ENCODE measurements at regions of chr4 and their contacts with region 1.

Region 1: DNA sequence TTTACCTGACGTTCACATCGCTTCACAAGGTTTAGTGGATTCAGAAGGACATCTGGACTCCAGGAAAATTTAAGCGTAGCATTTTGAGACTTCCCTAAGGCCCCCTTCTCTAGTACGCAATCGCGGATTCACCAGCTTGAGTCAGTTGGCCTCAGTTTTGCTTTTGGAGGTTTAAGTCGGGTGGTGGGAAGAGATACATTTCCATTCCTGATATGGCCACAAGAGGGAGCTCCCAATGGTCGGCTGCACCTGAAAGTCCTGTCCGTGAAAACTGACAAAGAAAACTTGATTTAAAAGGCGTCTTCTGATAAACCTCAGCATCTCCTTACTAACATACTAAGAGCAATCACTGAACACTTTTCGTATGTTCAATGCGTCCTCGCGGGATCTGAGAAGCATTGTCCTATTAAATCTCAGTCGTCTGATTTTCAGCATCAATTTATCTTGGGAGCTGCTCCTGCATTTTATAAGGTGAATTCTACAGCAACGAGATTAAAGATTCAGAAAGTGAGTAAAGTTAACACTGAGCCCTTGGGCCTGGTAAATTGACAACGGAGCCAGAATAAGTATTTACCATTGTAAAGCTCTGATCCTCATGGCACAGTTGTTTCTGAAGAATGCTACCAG is 50.6 kb downstream of the LGI2 start:
- DNase-seq: peak; percentile 73
- H3K4me3 Mint-ChIP-seq: no peak overlapping the region
- H3K27ac Mint-ChIP-seq: no peak overlapping the region
- H3K4me1 Mint-ChIP-seq: peaks cover 13% of the 10 kb centered on the region
- H3K27me3 Mint-ChIP-seq: peaks cover 5% of the 10 kb centered on the region
- CTCF ChIP-seq: peak; percentile 81

Region 2: DNA sequence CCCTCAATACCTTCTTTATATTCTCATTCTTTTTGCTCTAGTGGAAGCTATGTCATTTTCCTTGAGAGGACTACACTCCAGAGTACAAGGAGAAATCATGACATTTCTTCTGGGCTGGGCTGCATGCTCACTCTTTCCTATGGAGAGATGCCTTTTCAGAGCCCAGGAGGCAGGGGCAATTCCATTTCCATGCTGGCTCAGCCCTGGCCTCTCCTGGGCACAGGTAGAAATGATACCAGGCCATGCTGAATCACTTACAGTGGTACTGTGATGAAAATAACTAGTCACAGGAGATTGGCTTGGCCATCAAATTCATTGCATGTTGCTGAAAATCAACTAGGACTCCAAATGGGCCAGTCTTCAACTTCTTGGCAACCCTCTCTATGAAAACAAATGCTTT is 1056.3 kb before region 1 on chr4:
- CTCF ChIA-PET with region 1: no interaction called
- POLR2A ChIA-PET with region 1: no interaction called
- intact Hi-C with region 1: no loop called
- DNase-seq: no peak
- H3K4me3 Mint-ChIP-seq: no peak overlapping the region
- H3K27ac Mint-ChIP-seq: no peak overlapping the region
- H3K4me1 Mint-ChIP-seq: peaks cover 14% of the 10 kb centered on the region
- H3K27me3 Mint-ChIP-seq: no peaks in the 10 kb centered on the region
- CTCF ChIP-seq: no peak

Region 3: DNA sequence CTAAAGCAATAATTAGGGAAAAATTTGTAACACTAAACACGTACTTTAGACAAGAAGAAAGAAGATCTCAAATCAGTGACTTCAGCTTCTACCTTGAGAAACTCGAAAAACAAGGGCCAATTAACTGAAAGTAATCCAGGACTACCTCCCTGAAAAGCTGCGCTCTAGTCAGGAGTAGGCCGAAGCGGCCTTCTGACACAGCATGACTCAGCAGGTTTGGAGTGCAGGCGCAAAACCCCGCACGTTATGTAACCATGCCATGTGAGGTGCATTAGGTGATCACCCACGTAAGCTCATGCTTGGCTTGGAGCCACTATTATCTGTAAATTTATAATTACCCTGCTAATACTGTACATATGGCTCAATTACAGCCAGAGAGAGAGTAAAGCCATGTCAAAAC is 14.6 kb before region 1 on chr4:
- CTCF ChIA-PET with region 1: interaction called, 12 read pairs
- POLR2A ChIA-PET with region 1: no interaction called
- intact Hi-C with region 1: no loop called
- DNase-seq: peak; percentile 63
- H3K4me3 Mint-ChIP-seq: no peak overlapping the region
- H3K27ac Mint-ChIP-seq: no peak overlapping the region
- H3K4me1 Mint-ChIP-seq: no peaks in the 10 kb centered on the region
- H3K27me3 Mint-ChIP-seq: no peaks in the 10 kb centered on the region
- CTCF ChIP-seq: no peak

Region 4: GRCh38 chr4:24999392-25000089 is 19.4 kb after region 1 on chr4:
- CTCF ChIA-PET with region 1: interaction called, 49 read pairs
- POLR2A ChIA-PET with region 1: no interaction called
- intact Hi-C with region 1: no loop called
- DNase-seq: no peak
- H3K4me3 Mint-ChIP-seq: no peak overlapping the region
- H3K27ac Mint-ChIP-seq: no peak overlapping the region
- H3K4me1 Mint-ChIP-seq: no peaks in the 10 kb centered on the region
- H3K27me3 Mint-ChIP-seq: no peaks in the 10 kb centered on the region
- CTCF ChIP-seq: no peak

Region 5: DNA sequence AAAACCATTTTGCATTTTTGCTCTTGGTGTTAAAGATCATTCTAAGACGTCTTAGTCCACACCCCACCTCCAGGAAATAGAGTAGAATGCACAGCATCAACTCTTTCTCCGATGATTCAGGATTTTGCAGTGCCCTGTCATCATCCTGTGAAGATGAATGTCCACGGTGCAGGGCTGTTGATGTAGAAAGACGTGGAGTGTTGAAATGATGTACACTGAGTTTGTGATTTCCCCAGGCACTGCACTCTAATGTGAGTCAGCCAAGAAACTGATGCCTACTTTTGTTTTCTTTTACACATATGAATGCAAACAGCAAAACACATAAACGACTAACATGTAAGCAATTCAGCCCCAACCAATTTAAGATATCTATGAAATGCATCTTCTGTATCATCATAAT is 40.1 kb after region 1 on chr4:
- CTCF ChIA-PET with region 1: interaction called, 20 read pairs
- POLR2A ChIA-PET with region 1: interaction called, 3 read pairs
- intact Hi-C with region 1: no loop called
- DNase-seq: peak; percentile 83
- H3K4me3 Mint-ChIP-seq: no peak overlapping the region
- H3K27ac Mint-ChIP-seq: peak overlapping the region; percentile 39
- H3K4me1 Mint-ChIP-seq: peaks cover 21% of the 10 kb centered on the region
- H3K27me3 Mint-ChIP-seq: no peaks in the 10 kb centered on the region
- CTCF ChIP-seq: no peak

Region 6: GRCh38 chr4:25043548-25043947 is 63.4 kb after region 1 on chr4:
- CTCF ChIA-PET with region 1: interaction called, 5 read pairs
- POLR2A ChIA-PET with region 1: no interaction called
- intact Hi-C with region 1: loop called (anchors 1 kb)
- DNase-seq: no peak
- H3K4me3 Mint-ChIP-seq: no peak overlapping the region
- H3K27ac Mint-ChIP-seq: no peak overlapping the region
- H3K4me1 Mint-ChIP-seq: no peaks in the 10 kb centered on the region
- H3K27me3 Mint-ChIP-seq: peaks cover 72% of the 10 kb centered on the region
- CTCF ChIP-seq: no peak

Measured in MCF 10A (cell line).